ENCODE measurements at regions of chr7 and their contacts with region 1.

Region 1: GRCh38 chr7:116173051-116174028 is 37.0 kb upstream of the TES start:
- DNase-seq: peak; percentile 30
- H3K4me3 ChIP-seq: no peak overlapping the region
- H3K27ac ChIP-seq: no peak overlapping the region
- H3K4me1 ChIP-seq: no peaks in the 10 kb centered on the region
- CTCF ChIP-seq: peak; percentile 80

Region 2: GRCh38 chr7:115087437-115087836 is 1085.9 kb before region 1 on chr7:
- CTCF ChIA-PET with region 1: no interaction called
- POLR2A ChIA-PET with region 1: interaction called, 10 read pairs
- intact Hi-C with region 1: no loop called
- DNase-seq: no peak
- H3K4me3 ChIP-seq: no peak overlapping the region
- H3K27ac ChIP-seq: no peak overlapping the region
- H3K4me1 ChIP-seq: no peaks in the 10 kb centered on the region
- CTCF ChIP-seq: no peak

Region 3: GRCh38 chr7:116138202-116138801 is 35.0 kb before region 1 on chr7:
- CTCF ChIA-PET with region 1: no interaction called
- POLR2A ChIA-PET with region 1: no interaction called
- intact Hi-C with region 1: loop called (anchors 2 kb)
- DNase-seq: peak; percentile 45
- H3K4me3 ChIP-seq: no peak overlapping the region
- H3K27ac ChIP-seq: no peak overlapping the region
- H3K4me1 ChIP-seq: no peaks in the 10 kb centered on the region
- CTCF ChIP-seq: peak; percentile 88

Region 4: DNA sequence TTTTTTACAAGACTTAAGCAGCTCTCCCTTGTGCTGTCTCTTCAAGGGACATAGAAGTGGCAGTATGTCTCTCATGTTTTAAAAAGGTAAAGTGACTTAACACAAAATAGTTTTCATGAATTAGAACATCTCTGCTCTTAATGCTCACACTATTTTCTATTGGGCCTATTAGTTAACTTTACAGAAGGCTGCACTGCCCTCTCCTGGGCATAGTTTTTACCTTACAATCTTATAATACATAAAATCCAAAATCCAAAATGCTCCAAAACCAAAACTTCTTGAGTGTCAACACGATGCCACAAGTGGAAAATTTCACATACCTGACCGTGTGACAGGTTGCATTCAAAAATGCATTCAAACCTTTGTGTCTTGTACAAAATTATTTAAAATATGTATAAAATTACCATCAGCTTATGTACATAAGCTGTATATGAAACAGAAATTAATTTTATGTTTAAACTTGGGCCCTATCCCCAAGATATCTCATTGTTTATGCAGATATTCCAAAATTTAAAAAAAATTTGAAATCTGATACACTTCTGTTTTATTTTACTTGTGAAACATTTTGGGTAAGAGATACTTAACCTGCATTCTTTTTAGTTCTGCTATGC is 62.8 kb after region 1 on chr7:
- CTCF ChIA-PET with region 1: interaction called, 3 read pairs
- POLR2A ChIA-PET with region 1: no interaction called
- intact Hi-C with region 1: loop called (anchors 1 kb)
- DNase-seq: peak; percentile 29
- H3K4me3 ChIP-seq: no peak overlapping the region
- H3K27ac ChIP-seq: no peak overlapping the region
- H3K4me1 ChIP-seq: no peaks in the 10 kb centered on the region
- CTCF ChIP-seq: peak; percentile 78

Region 5: GRCh38 chr7:116588641-116589594 is 415.6 kb after region 1 on chr7:
- CTCF ChIA-PET with region 1: no interaction called
- POLR2A ChIA-PET with region 1: interaction called, 3 read pairs
- intact Hi-C with region 1: loop called (anchors 5 kb)
- DNase-seq: peak; percentile 57
- H3K4me3 ChIP-seq: no peak overlapping the region
- H3K27ac ChIP-seq: no peak overlapping the region
- H3K4me1 ChIP-seq: peaks cover under 1% of the 10 kb centered on the region
- CTCF ChIP-seq: peak; percentile 92